Motor neuron (in vitro differentiated cells): ENCODE measurements at regions of chr2 and their contacts with region 1.

Region 1: GRCh38 chr2:96024336-96025193 is 10.2 kb downstream of the GPAT2 start:
- ATAC-seq: no peak
- H3K4me3 ChIP-seq: no peak overlapping the region
- H3K27ac ChIP-seq: no peak overlapping the region
- H3K4me1 ChIP-seq: peaks cover 0 to 3% of the 10 kb centered on the region in 2 donors

Region 2: GRCh38 chr2:94756071-94756470 is 1268.5 kb before region 1 on chr2:
- in situ Hi-C with region 1: no loop called
- ATAC-seq: no peak
- H3K4me3 ChIP-seq: no peak overlapping the region
- H3K27ac ChIP-seq: no peak overlapping the region
- H3K4me1 ChIP-seq: no peaks in the 10 kb centered on the region

Region 3: GRCh38 chr2:96116879-96117697 is 92.5 kb after region 1 on chr2:
- in situ Hi-C with region 1: loop called in 2 of 9 experiments (anchors 25 kb)
- ATAC-seq: peak; percentile 86 to 92 (median 89)
- H3K4me3 ChIP-seq: peak overlapping the region; percentile 41 to 50 (median 43)
- H3K27ac ChIP-seq: no peak overlapping the region
- H3K4me1 ChIP-seq: no peaks in the 10 kb centered on the region

Region 4: GRCh38 chr2:96265840-96266679 is 241.5 kb after region 1 on chr2 and contains the starts of genes CIAO1 and TMEM127:
- in situ Hi-C with region 1: loop called in 1 of 9 experiments (anchors 25 kb)
- ATAC-seq: peak; percentile 88 to 96 (median 94)
- H3K4me3 ChIP-seq: peak within 1 kb of the TSS; percentile 67 to 92 (median 90)
- H3K27ac ChIP-seq: peak within 1 kb of the TSS; percentile 69 to 85
- H3K4me1 ChIP-seq: peaks cover 12 to 18% of the 10 kb centered on the region in 2 donors
- total RNA-seq, gene CIAO1: 57.4 to 75.2 (median 64.6) TPM
- total RNA-seq, gene TMEM127: 14.7 to 26.4 (median 19.7) TPM

Region 5: GRCh38 chr2:96320728-96321622 is 296.4 kb after region 1 on chr2:
- in situ Hi-C with region 1: no loop called
- ATAC-seq: peak; percentile 59 to 70 (median 65)
- H3K4me3 ChIP-seq: peak overlapping the region; percentile 44 to 53 (median 45)
- H3K27ac ChIP-seq: no peak overlapping the region
- H3K4me1 ChIP-seq: peaks cover 3 to 5% of the 10 kb centered on the region in 2 donors